ENCODE measurements at regions of chr19 and their contacts with region 1.

Region 1: GRCh38 chr19:52237771-52238400 is 31.5 kb upstream of the ZNF766 start:
- DNase-seq: no peak
- ATAC-seq: peak; percentile 65 to 72

Region 2: GRCh38 chr19:52139252-52140031 is 98.4 kb before region 1 on chr19 and contains the start of gene ZNF616:
- intact Hi-C with region 1: loop called (anchors 1 to 5 kb)
- DNase-seq: peak; percentile 97
- ATAC-seq: peak; percentile 95 to 96
- total RNA-seq, gene ZNF616: 5.4 to 7.8 TPM

Measured in left cardiac atrium (tissue), 4 donors.